Activated T-helper 1 cell treated with anti-CD3 and anti-CD28 coated beads, Interleukin-12 subunit alpha, Interleukin-12 subunit beta, Interleukin-2, Interleukin-4 antibody, amounts not matched to agents 30 ng/mL and 10 ng/mL and 1 ng/mL, durations not matched to agents 14 hours and 24 hours and 36 hours (primary cell): ENCODE measurements at regions of chr9 and their contacts with region 1.

Region 1: GRCh38 chr9:134443168-134444037 is 117.1 kb downstream of the RXRA start:
- DNase-seq: peak; percentile 79
- H3K4me3 Mint-ChIP-seq: no peak overlapping the region
- H3K27ac Mint-ChIP-seq: no peak overlapping the region
- H3K4me1 Mint-ChIP-seq: no peaks in the 10 kb centered on the region
- H3K27me3 Mint-ChIP-seq: peaks cover 9% of the 10 kb centered on the region

Region 2: GRCh38 chr9:134171316-134172197 is 271.8 kb before region 1 on chr9:
- intact Hi-C with region 1: loop called (anchors 1 kb)
- DNase-seq: no peak
- H3K4me3 Mint-ChIP-seq: no peak overlapping the region
- H3K27ac Mint-ChIP-seq: no peak overlapping the region
- H3K4me1 Mint-ChIP-seq: no peaks in the 10 kb centered on the region
- H3K27me3 Mint-ChIP-seq: no peaks in the 10 kb centered on the region

Region 3: DNA sequence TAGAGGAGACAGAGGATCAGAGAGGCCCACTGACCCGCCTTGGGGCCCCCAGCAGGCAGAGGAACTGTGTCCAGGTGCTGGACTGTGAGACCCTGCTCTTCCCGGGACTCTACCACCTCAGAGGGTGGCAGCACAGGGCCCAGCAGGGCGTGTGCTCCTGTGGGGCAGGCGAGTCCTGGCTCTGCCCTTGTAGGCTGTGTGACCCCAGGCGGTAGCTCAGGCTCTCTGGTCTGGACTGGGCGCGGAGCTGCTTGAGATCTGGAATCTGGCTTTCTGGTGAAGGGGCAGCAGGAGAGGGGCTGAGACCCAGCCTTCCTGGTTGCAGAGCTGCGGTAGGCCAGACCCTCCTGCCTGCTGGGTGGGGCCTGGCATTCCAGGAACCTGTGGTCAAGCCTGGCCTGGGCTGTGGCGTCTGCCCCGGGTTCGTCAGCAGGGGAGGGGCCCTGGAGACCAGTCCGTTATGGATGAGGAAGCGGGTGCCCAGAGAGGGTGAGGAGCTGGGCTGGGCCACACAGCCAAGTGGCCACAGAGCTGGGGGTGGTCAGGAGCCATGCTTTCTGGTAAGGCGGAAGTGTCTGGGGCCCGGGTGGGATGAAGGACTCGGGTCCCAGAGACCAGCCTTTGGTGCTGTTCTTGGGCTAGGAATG is 70.7 kb before region 1 on chr9:
- intact Hi-C with region 1: loop called (anchors 1 kb)
- DNase-seq: no peak
- H3K4me3 Mint-ChIP-seq: no peak overlapping the region
- H3K27ac Mint-ChIP-seq: no peak overlapping the region
- H3K4me1 Mint-ChIP-seq: no peaks in the 10 kb centered on the region
- H3K27me3 Mint-ChIP-seq: peaks cover 3% of the 10 kb centered on the region

Region 4: GRCh38 chr9:134391314-134392231 is 51.8 kb before region 1 on chr9:
- intact Hi-C with region 1: loop called (anchors 1 kb)
- DNase-seq: peak; percentile 59
- H3K4me3 Mint-ChIP-seq: peak overlapping the region; percentile 51
- H3K27ac Mint-ChIP-seq: peak overlapping the region; percentile 82
- H3K4me1 Mint-ChIP-seq: peaks cover 38% of the 10 kb centered on the region
- H3K27me3 Mint-ChIP-seq: peaks cover 33% of the 10 kb centered on the region

Region 5: GRCh38 chr9:134455934-134456739 is 12.7 kb after region 1 on chr9:
- intact Hi-C with region 1: loop called (anchors 1 kb)
- DNase-seq: peak; percentile 57
- H3K4me3 Mint-ChIP-seq: peak overlapping the region; percentile 77
- H3K27ac Mint-ChIP-seq: peak overlapping the region; percentile 84
- H3K4me1 Mint-ChIP-seq: peaks cover 6% of the 10 kb centered on the region
- H3K27me3 Mint-ChIP-seq: no peaks in the 10 kb centered on the region

Region 6: DNA sequence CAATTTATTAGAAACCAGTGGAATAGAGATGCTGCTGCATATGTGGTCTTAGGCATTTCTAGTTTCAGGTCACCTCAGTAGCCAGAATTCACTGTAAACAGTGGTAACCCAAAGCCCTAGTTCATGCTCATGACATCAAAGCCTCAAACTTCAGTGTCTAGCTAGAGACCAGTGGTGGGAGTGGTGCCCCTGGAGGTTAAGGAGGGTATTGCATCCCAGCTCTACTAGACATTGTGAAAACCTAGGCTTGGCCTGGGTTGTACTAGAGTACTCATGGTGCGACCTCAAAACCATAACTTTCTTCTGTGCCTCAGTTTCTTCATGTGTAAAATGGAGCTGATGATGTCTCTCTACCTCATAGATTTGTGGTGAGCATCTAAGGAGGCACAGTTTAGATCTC is 217.0 kb after region 1 on chr9:
- intact Hi-C with region 1: no loop called
- DNase-seq: no peak
- H3K4me3 Mint-ChIP-seq: no peak overlapping the region
- H3K27ac Mint-ChIP-seq: no peak overlapping the region
- H3K4me1 Mint-ChIP-seq: no peaks in the 10 kb centered on the region
- H3K27me3 Mint-ChIP-seq: peaks cover 4% of the 10 kb centered on the region

Region 7: DNA sequence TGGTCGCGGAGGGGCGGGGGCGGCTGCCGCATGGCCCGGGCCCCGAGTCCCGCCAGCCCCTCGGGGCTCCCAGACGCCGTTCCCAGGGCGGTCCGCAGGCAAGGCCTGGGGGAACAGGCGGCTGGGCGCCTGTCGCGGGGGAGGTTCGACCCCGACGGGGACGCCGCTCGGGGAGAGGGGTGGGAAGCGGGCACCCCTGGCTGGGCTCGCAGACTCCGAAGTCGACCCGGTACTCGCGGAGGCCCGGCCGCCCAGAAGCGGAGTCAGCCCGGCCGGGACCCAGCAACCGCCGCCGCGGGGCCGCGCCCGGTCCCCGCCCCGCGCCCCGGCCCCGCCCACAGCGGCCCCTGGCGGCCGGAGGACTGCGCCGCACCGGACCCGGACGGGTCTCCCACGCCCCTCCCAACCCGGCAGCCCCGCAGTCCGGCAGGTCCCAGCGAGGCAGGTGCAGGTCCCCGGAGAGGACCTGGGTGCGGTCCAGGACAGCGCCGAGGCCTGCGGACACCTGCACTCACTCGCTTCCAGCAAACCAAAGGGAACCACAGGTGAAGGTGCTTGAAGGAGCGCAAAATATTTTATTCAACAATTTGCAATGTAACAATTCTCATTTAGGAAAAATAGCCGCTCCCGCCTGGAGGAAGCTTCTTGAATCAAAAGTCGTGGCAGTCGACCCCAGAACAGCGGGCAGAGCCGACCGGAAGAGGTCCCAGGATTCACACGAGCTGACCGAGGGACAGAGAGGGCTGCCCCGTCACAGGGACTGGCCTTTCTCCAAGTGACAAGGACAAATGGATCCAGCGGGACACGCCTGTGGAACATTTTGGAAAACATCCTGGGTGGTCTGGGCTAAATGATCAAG is 1996.4 kb after region 1 on chr9 and contains the start of gene INPP5E:
- intact Hi-C with region 1: no loop called
- DNase-seq: peak; percentile 84
- H3K4me3 Mint-ChIP-seq: peak within 1 kb of the TSS; percentile 88
- H3K27ac Mint-ChIP-seq: peak within 1 kb of the TSS; percentile 23
- H3K4me1 Mint-ChIP-seq: peaks cover 18% of the 10 kb centered on the region
- H3K27me3 Mint-ChIP-seq: no peaks in the 10 kb centered on the region
- total RNA-seq, gene INPP5E: 19.7 and 20.0 TPM in 2 replicates